Psoas muscle (tissue), 8 donors: ENCODE measurements at regions of chr17 and their contacts with region 1.

Region 1: GRCh38 chr17:1267471-1267947 is 2.7 kb upstream of the BHLHA9 start:
- DNase-seq: no peak
- ATAC-seq: peak; percentile 48 to 61 (median 52)
- H3K4me3 ChIP-seq: peak overlapping the region; percentile 80
- H3K27ac ChIP-seq: peak overlapping the region; percentile 78
- H3K4me1 ChIP-seq: no peaks in the 10 kb centered on the region
- H3K27me3 ChIP-seq: peaks cover 3 to 29% (median 6%) of the 10 kb centered on the region in 3 donors
- CTCF ChIP-seq: no peak

Region 2: GRCh38 chr17:1532836-1533602 is 265.5 kb after region 1 on chr17:
- intact Hi-C with region 1: loop called in 1 of 2 experiments (anchors 5 kb)
- DNase-seq: peak in 1 of 2 donors; percentile 64
- ATAC-seq: peak; percentile 76 to 85 (median 84)
- H3K4me3 ChIP-seq: no peak overlapping the region
- H3K27ac ChIP-seq: peak overlapping the region; percentile 65
- H3K4me1 ChIP-seq: peaks cover 15% of the 10 kb centered on the region
- H3K27me3 ChIP-seq: no peaks in the 10 kb centered on the region
- CTCF ChIP-seq: peak; percentile 40